HepG2 (cell line): ENCODE measurements at regions of chr5 and their contacts with region 1.

Region 1: GRCh38 chr5:42908509-42909488 is 97.1 kb upstream of the SELENOP start:
- DNase-seq: peak; percentile 81
- ATAC-seq: peak; percentile 92
- H3K4me3 ChIP-seq: peak overlapping the region; percentile 25 to 67 (median 61)
- H3K27ac ChIP-seq: no peak overlapping the region
- H3K4me1 ChIP-seq: peaks cover 17% of the 10 kb centered on the region
- H3K27me3 ChIP-seq: no peaks in the 10 kb centered on the region
- CTCF ChIP-seq: peak; percentile 92
- EP300 ChIP-seq: no peak
- POLR2A ChIP-seq: no peak
- RAD21 ChIP-seq: peak; percentile 65; the same call in 1 of the 2 replicates

Region 2: DNA sequence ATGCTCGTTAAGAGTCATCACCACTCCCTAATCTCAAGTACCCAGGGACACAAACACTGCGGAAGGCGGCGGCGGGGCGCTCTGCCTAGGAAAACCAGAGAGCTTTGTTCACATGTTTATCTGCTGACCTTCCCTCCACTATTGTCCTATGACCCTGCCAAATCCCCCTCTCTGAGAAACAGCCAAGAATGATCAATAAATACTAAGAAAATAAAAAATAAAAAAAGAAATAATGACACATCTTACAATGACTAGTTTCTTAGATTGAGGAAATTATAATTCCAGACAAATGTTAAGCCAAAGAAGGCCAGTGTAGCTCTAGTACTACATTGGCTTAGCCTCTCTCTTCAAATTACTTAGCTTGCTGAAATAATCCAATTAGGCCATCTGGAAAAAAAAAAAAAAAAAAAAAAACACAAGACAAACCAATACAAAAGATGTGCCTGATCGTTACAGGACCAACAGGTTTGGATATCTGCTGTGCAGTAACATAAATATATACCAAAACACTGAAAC is 73.4 kb after region 1 on chr5:
- CTCF ChIA-PET with region 1: no interaction called
- POLR2A ChIA-PET with region 1: no interaction called
- in situ Hi-C with region 1: no loop called
- intact Hi-C with region 1: no loop called
- DNase-seq: no peak
- ATAC-seq: peak; percentile 37
- H3K4me3 ChIP-seq: no peak overlapping the region
- H3K27ac ChIP-seq: no peak overlapping the region
- H3K4me1 ChIP-seq: peaks cover 23% of the 10 kb centered on the region
- H3K27me3 ChIP-seq: no peaks in the 10 kb centered on the region
- CTCF ChIP-seq: no peak
- EP300 ChIP-seq: no peak
- POLR2A ChIP-seq: no peak
- RAD21 ChIP-seq: no peak

Region 3: GRCh38 chr5:42994246-42995151 is 85.7 kb after region 1 on chr5:
- CTCF ChIA-PET with region 1: no interaction called
- POLR2A ChIA-PET with region 1: interaction called, 5 read pairs
- in situ Hi-C with region 1: no loop called
- intact Hi-C with region 1: loop called (anchors 2 kb)
- DNase-seq: peak; percentile 81
- ATAC-seq: peak; percentile 86
- H3K4me3 ChIP-seq: peak overlapping the region; percentile 75 to 93 (median 77)
- H3K27ac ChIP-seq: peak overlapping the region; percentile 64
- H3K4me1 ChIP-seq: peaks cover 25% of the 10 kb centered on the region
- H3K27me3 ChIP-seq: no peaks in the 10 kb centered on the region
- CTCF ChIP-seq: peak; percentile 87
- EP300 ChIP-seq: no peak
- POLR2A ChIP-seq: peak in 1 of 2 experiments; percentile 43; a peak in 1 of 4 replicates
- RAD21 ChIP-seq: 0 out of 2 replicates have a peak, but pooled peaks have one; percentile 40

Region 4: GRCh38 chr5:43008369-43009153 is 99.8 kb after region 1 on chr5:
- CTCF ChIA-PET with region 1: no interaction called
- POLR2A ChIA-PET with region 1: interaction called, 7 read pairs
- in situ Hi-C with region 1: no loop called
- intact Hi-C with region 1: loop called (anchors 1 kb)
- DNase-seq: peak; percentile 89
- ATAC-seq: peak; percentile 71
- H3K4me3 ChIP-seq: peak overlapping the region; percentile 73 to 94 (median 78)
- H3K27ac ChIP-seq: peak overlapping the region; percentile 84
- H3K4me1 ChIP-seq: peaks cover 12% of the 10 kb centered on the region
- H3K27me3 ChIP-seq: no peaks in the 10 kb centered on the region; a peak in 1 of 5 replicates
- CTCF ChIP-seq: peak; percentile 76
- EP300 ChIP-seq: peak in 1 of 2 experiments; percentile 53; a peak in 1 of 4 replicates
- POLR2A ChIP-seq: peak; percentile 45 to 60; a peak in 3 of 4 replicates
- RAD21 ChIP-seq: peak; percentile 14; the same call in 1 of the 2 replicates

Region 5: DNA sequence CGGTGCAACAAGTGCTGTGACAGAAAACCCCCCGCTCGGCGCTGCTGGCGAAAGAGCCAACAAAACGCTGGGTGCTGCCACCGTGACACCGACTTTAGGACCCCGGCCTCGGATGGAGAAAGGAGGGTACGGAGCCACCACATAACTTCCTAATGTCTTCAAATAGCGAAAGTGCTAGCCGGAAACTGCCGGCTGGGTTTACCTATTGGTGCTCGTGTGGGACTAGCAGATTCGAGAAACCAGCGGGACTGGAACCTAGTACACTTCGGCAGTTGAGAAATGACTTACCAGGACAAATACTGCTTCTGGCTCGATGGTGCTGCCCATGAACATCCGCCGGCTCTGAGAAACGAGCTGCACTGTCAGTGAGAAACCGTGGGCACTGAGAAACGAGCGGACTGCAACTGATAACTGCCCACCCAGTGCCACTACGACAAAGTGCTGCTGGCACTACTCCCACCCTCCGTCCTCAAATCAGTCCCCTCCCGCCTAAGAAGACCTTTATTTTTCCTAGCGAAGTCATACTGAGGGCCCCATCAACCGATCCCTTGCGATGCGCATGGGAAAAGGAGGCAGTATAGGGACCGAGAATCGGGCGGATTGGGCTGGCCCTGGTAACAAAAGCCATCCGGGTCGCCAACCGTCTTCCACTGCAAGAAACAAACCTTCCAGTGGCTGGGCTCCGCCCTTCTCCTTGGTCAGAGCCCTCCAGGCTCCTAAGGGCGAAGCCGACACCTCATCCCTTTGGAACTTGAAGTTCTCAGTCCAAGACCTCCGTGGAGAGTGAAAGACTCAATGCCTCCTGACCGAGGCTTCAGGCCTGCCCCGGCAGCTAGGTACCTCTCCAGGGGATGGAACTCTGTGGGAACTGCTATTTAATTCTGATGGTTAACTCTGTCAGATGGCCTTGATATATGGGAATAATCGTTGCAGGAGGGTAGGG is 158.3 kb after region 1 on chr5:
- CTCF ChIA-PET with region 1: no interaction called
- POLR2A ChIA-PET with region 1: interaction called, 3 read pairs
- in situ Hi-C with region 1: no loop called
- intact Hi-C with region 1: loop called (anchors 1 kb)
- DNase-seq: peak; percentile 87
- ATAC-seq: peak; percentile 83
- H3K4me3 ChIP-seq: peak overlapping the region; percentile 82 to 92 (median 83)
- H3K27ac ChIP-seq: peak overlapping the region; percentile 98
- H3K4me1 ChIP-seq: peaks cover 35% of the 10 kb centered on the region
- H3K27me3 ChIP-seq: no peaks in the 10 kb centered on the region; a peak in 1 of 5 replicates
- CTCF ChIP-seq: peak; percentile 21; the same call in 1 of the 2 replicates
- EP300 ChIP-seq: peak; percentile 38 to 84; a peak in 3 of 4 replicates
- POLR2A ChIP-seq: peak; percentile 15 to 35; a peak in 3 of 4 replicates
- RAD21 ChIP-seq: no peak

Region 6: GRCh38 chr5:43129161-43129560 is 220.4 kb after region 1 on chr5:
- CTCF ChIA-PET with region 1: no interaction called
- POLR2A ChIA-PET with region 1: no interaction called
- in situ Hi-C with region 1: no loop called
- intact Hi-C with region 1: no loop called
- DNase-seq: no peak
- ATAC-seq: no peak
- H3K4me3 ChIP-seq: no peak overlapping the region
- H3K27ac ChIP-seq: no peak overlapping the region
- H3K4me1 ChIP-seq: peaks cover 26% of the 10 kb centered on the region
- H3K27me3 ChIP-seq: no peaks in the 10 kb centered on the region
- CTCF ChIP-seq: no peak
- EP300 ChIP-seq: no peak
- POLR2A ChIP-seq: no peak
- RAD21 ChIP-seq: no peak

Region 7: GRCh38 chr5:43389679-43390329 is 481.0 kb after region 1 on chr5:
- CTCF ChIA-PET with region 1: interaction called, 3 read pairs
- POLR2A ChIA-PET with region 1: no interaction called
- in situ Hi-C with region 1: loop called (anchors 25 kb)
- intact Hi-C with region 1: loop called (anchors 2 kb)
- DNase-seq: peak; percentile 87
- ATAC-seq: peak; percentile 98
- H3K4me3 ChIP-seq: no peak overlapping the region
- H3K27ac ChIP-seq: no peak overlapping the region
- H3K4me1 ChIP-seq: no peaks in the 10 kb centered on the region
- H3K27me3 ChIP-seq: no peaks in the 10 kb centered on the region
- CTCF ChIP-seq: peak; percentile 87
- EP300 ChIP-seq: no peak
- POLR2A ChIP-seq: no peak
- RAD21 ChIP-seq: peak; percentile 88